KBM-7 (cell line): ENCODE measurements at regions of chr1 and their contacts with region 1.

Region 1: DNA sequence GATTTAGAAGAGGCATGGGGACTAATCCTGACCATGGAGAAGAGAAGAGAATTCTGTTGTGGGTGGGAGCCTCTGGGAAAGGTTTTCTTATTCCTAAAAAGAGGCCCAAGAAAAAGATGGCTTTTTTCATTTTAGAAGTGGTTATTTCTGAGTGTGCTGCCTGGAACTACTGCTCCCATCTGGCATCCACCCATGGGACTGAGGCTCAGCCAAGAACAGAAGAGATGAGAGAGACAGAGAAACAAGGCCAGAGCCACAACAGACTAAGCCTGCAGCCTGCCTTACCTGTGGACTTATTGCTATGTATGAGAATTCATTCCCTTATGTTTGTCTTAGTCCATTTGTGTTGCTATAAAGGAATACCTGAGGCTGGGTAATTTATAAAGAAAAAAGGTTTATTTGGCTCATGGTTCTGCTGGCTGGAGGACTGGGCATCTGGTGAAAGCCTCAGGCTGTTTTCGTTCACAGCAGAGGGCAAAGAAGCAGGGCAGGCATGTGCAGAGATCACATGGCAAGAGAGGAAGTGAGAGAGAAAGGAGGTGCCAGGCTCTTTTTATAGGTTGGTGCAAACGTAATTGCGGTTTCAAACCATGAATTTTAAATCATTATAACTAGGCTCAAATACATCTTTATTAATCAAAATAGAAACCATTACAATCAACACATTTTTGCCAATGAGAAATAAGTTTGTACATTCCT is 57.5 kb upstream of the PRDM2 start:
- DNase-seq: no peak

Region 2: GRCh38 chr1:13224480-13225060 is 417.9 kb before region 1 on chr1:
- in situ Hi-C with region 1: no loop called
- DNase-seq: no peak

Region 3: GRCh38 chr1:13517193-13517812 is 125.2 kb before region 1 on chr1:
- in situ Hi-C with region 1: no loop called
- DNase-seq: peak; percentile 11

Region 4: DNA sequence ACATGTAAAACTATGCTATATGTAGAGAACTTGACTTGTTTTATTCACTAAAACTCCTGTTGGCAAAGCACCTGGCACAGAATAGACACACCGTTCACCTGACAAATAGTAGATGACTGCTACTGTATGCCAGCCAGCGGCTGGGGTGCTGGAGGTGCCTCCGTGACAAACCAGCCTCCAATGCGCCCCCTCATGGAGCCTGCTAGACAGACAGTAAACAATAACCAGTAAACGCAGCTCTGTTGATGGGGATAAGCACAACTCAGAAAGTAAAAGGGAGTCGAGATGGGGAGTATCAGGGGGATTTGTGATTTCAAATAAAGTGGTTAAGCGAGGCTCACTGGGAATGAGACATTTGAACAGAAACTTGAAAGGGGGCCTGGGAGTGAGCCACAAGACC is 164.8 kb after region 1 on chr1:
- in situ Hi-C with region 1: no loop called
- DNase-seq: peak; percentile 14

Region 5: DNA sequence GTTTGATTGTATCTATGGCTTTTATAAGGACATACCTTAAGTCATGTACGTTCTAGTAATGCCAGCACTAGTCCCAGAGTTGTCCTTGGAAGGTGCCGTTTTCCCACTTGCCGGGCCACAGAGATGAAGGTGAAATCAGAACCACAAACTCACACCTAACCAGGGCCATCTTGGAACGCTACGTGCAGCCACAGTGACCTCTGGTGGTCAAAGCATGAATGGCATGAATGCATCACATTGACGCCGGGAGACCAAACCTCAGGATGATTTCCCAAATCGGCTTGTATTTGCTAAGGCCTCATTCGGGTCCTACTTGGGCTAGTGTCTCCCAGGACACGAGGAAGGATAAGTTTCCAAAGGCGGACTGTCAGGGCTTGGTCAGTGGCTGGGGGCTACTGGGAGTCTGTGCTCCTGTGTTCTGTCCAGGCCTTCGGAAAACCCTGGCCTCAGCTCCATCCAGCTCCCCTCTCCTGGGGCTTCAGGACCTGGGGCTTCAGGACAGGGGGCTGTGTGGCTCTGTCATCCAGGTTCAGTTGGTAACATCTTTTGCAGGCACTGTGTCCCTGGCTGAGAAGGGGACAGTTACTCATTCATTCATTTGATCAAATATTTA is 318.0 kb after region 1 on chr1:
- in situ Hi-C with region 1: loop called (anchors 25 kb)
- DNase-seq: peak; percentile 55